Tibial artery (tissue), 4 donors: ENCODE measurements at regions of chr7 and their contacts with region 1.

Region 1: DNA sequence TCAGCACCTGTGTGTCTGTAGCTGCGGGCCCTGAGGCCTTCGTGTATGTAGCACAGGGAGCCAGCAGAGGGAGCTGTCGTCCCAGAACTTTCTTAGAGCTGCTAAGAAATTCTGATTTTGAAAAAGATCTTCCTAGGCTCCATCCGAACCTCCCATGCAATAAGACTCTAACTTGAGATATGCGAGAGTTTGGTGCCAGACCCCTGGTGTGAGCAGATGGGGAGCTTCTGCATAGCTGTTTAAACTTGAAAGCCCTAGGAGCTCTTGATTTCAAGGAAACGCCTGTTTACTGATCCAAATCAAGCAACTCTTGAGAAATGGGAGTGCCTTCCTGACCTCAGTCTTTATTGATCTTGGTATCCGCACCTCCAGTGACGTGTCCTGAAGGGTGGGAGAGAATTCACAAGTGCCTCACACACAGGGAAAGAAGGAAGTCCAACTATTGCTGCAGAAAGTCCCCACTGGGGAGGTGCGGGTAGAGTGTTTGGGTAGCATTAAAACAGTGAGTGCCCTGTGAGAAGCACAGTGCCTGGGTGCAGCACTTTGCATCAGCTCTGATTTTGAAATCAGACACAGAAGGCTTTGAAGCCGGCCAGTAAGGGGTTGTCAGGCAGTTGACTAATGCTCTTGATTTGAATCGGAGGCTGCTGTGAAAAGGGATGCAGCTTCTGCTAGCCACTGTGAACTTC is 66.4 kb upstream of the STRIP2 start:
- DNase-seq: peak; percentile 65 to 78
- H3K4me3 ChIP-seq: no peak overlapping the region
- H3K27ac ChIP-seq: no peak overlapping the region
- H3K4me1 ChIP-seq: peaks cover 0 to 10% (median 3%) of the 10 kb centered on the region in 4 donors
- H3K27me3 ChIP-seq: no peaks in the 10 kb centered on the region
- CTCF ChIP-seq: peak; percentile 79 to 80

Region 2: GRCh38 chr7:128031901-128032604 is 1335.8 kb before region 1 on chr7:
- intact Hi-C with region 1: no loop called
- DNase-seq: no peak
- H3K4me3 ChIP-seq: peak overlapping the region; percentile 47 to 58
- H3K27ac ChIP-seq: no peak overlapping the region
- H3K4me1 ChIP-seq: peaks cover 0 to 24% (median 19%) of the 10 kb centered on the region in 4 donors
- H3K27me3 ChIP-seq: peaks cover 0 to 25% of the 10 kb centered on the region in 2 donors
- CTCF ChIP-seq: no peak

Region 3: GRCh38 chr7:129644634-129645230 is 276.9 kb after region 1 on chr7:
- intact Hi-C with region 1: loop called (anchors 10 kb)
- DNase-seq: no peak
- H3K4me3 ChIP-seq: no peak overlapping the region
- H3K27ac ChIP-seq: no peak overlapping the region
- H3K4me1 ChIP-seq: no peaks in the 10 kb centered on the region
- H3K27me3 ChIP-seq: no peaks in the 10 kb centered on the region
- CTCF ChIP-seq: peak; percentile 33 to 48